PC-9 (cell line): ENCODE measurements at regions of chr12 and their contacts with region 1.

Region 1: DNA sequence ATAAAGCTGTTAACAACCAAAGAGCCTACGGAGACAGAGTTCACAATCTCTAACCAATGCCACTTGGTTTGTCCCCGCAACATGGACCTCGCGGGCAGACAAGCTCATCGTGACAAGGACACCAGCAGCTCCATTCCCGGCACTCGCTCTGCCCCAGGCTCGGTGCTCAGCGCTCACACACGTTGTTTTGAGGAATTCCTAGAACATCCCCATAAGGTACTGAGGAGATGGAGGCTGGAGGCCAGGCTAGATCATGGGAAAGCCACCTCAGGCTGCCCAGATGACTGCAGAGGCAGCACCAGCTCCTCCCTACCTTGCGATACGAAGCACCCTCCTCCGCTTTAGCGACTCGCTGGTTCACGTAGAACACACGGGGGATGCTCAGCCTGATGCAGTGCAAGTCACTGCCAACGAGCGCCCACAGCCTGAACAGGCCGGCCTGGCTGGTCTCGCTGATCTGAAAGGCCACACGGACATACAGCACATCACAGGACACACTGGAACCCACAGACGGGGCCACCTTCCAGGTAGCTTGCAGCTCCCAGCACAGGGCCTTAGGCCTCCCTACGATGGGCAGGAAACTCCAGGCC is 30.1 kb downstream of the P2RX2 start:
- DNase-seq: no peak
- H3K4me3 ChIP-seq: no peak overlapping the region
- H3K27ac ChIP-seq: no peak overlapping the region
- H3K4me1 ChIP-seq: no peaks in the 10 kb centered on the region
- H3K27me3 ChIP-seq: no peaks in the 10 kb centered on the region
- CTCF ChIP-seq: no peak

Region 2: DNA sequence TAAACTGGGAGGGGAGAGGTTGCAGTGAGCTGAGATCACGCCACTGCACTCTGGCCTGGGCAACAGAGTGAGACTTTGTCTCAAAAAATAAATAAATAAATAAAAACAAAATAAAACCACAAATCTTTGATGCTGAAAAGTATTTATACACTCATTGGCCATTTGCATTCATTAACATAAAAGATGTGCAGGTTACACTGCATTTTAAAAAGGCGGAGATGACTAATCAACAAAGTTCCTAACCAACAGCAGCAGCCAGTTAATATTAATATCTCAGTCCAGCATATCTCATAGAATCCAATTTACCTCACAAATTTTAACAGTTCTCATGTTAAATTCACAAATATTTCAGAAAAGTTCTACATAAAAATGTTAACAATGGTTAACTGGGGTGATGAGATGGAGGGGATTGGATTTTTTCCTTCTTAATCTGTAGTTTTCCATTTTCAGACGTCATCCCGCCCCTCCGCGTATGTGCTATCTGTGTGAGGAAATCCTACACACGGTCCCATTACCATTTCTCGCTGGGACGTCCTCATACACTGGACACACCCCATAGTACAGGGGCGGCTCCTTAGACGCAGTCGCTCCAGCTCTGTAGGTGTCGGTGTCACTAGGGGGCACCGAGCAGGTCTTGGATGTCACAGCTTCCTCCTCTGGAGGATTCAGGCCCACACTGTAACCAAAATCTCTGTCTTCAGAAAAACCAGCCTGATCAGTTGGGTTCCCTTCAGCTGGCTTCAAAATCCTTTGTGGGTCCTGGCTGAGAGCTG is 105.6 kb after region 1 on chr12:
- CTCF ChIA-PET with region 1: interaction called, 11 read pairs
- POLR2A ChIA-PET with region 1: no interaction called
- intact Hi-C with region 1: no loop called
- DNase-seq: no peak
- H3K4me3 ChIP-seq: no peak overlapping the region
- H3K27ac ChIP-seq: no peak overlapping the region
- H3K4me1 ChIP-seq: peaks cover 3% of the 10 kb centered on the region; the same call in 1 of the 2 replicates
- H3K27me3 ChIP-seq: no peaks in the 10 kb centered on the region
- CTCF ChIP-seq: no peak